ENCODE measurements at regions of chr6 and their contacts with region 1.

Region 1: DNA sequence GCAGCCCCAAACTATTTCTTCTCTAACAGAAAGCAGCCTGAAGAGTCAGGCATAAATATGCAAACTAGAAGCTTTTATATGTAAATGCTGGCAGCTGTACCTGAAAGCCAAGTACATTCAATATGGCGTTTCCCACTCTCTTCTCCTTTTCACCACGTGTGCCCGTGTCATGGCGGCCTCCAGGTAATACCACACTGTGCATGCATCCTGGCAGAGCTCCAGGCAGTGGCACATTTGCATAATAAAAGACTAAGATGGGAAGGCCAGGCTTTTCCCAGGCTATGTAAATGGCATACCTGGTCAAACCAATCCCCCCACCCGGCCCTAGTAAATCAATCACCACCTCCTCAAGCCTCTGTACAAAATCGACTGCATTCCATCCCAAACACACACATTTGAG is 120.6 kb downstream of the MMUT start:
- DNase-seq: no peak
- H3K4me3 ChIP-seq: no peak overlapping the region
- H3K27ac ChIP-seq: no peak overlapping the region
- H3K4me1 ChIP-seq: no peaks in the 10 kb centered on the region
- H3K27me3 ChIP-seq: no peaks in the 10 kb centered on the region
- CTCF ChIP-seq: no peak

Region 2: DNA sequence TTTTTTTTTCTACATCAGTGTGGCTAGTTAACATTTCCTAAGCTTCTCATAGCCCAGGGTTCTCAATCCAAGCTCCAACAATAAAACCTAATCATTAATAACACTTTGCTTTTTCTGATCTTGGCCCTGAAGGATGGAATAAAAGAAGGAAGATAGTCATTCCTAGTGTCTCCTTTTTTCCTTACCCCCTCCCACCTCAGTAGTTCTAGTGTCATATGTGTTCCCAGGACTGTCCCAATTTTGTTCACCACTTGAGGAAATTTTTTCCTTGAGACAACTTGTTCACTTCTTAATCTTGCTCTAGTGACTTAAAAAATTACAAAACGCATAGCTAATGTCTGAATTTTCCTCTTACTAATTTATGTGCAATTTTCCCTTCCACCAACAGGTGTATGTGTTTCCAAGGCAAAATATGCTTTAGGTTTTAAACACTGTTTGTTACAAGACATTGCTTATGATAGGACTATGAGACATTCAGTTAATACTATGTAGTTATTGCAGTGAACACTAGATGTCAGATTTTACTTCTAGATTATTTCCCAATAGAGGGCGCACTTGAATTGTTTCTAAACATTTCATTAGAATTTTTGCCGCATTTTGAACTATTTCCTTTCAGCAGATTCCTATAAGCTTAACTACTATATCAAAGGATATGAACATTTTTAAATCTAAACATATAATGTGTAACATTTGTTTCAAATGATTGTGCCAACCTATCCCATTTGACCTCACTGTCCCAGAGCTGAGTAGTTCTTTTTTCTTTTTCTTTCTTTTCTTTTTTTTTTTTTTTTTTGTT is 189.6 kb after region 1 on chr6:
- intact Hi-C with region 1: no loop called
- DNase-seq: no peak
- H3K4me3 ChIP-seq: no peak overlapping the region
- H3K27ac ChIP-seq: no peak overlapping the region
- H3K4me1 ChIP-seq: peaks cover 3% of the 10 kb centered on the region
- H3K27me3 ChIP-seq: no peaks in the 10 kb centered on the region
- CTCF ChIP-seq: peak; percentile 72

Region 3: DNA sequence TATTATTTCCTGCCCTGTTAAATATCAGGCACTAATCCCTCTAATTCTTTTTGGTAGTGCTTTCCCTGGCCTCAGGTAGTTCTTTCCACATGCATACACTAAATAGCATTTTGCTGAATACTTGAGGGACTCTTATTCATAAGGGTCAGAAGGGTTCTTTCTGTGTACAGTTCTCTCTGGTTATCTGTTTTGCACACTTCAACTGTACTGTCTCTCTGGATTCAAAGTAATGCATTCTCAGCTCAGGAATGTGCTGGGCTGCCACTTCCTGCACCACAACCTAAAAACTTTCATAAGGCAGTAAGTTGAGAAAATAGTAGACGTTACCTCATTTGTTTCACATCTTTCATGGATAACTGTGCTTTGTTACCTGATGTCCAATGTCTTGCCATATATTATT is 240.1 kb after region 1 on chr6:
- intact Hi-C with region 1: loop called (anchors 10 kb)
- DNase-seq: no peak
- H3K4me3 ChIP-seq: no peak overlapping the region
- H3K27ac ChIP-seq: no peak overlapping the region
- H3K4me1 ChIP-seq: no peaks in the 10 kb centered on the region
- H3K27me3 ChIP-seq: no peaks in the 10 kb centered on the region
- CTCF ChIP-seq: no peak

Region 4: GRCh38 chr6:49892280-49892679 is 549.9 kb after region 1 on chr6:
- intact Hi-C with region 1: no loop called
- DNase-seq: no peak
- H3K4me3 ChIP-seq: no peak overlapping the region
- H3K27ac ChIP-seq: no peak overlapping the region
- H3K4me1 ChIP-seq: no peaks in the 10 kb centered on the region
- H3K27me3 ChIP-seq: no peaks in the 10 kb centered on the region
- CTCF ChIP-seq: no peak

Measured in colonic mucosa (tissue), 4 donors.